ENCODE measurements at regions of chr11 and their contacts with region 1.

Region 1: GRCh38 chr11:113289431-113290187 is 24.8 kb upstream of the TTC12 start:
- DNase-seq: peak; percentile 81
- CTCF ChIP-seq: peak; percentile 90

Region 2: DNA sequence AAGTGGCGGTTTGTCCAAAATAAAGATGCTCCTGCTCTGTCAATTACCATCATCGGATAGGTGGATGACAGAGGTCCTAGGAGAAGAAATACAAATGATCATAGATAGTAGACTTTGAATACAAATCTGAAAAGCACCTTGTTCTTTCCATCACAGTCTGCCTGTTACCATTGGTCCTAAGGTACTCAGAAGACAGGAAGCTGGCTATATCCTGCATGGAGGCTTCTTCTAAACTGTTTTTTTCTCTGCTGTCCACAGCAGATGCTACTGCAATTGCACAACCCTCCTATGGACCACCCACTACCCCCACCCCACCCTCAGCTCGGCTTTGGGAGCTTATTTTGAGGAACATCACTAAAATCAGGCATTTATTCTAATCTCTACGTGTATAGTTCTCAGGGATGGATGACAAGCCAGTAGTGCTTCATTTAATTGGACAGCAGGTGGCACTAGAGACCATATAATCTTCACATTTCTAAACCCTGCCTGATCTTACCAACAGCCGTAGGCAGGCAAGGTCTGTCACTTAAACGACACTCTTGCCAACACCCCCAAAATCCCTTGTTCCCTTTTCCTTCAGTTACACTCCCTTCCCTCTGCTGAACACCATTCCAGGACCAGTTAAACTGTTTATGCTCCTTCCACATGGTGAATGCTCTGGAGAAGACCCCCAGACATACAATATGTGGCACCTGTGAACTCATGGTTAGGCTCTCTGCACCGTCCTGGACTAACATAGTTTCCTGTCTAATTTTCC is 1070.0 kb before region 1 on chr11:
- CTCF ChIA-PET with region 1: interaction called, 10 read pairs
- POLR2A ChIA-PET with region 1: no interaction called
- DNase-seq: peak; percentile 68
- CTCF ChIP-seq: peak; percentile 60

Region 3: DNA sequence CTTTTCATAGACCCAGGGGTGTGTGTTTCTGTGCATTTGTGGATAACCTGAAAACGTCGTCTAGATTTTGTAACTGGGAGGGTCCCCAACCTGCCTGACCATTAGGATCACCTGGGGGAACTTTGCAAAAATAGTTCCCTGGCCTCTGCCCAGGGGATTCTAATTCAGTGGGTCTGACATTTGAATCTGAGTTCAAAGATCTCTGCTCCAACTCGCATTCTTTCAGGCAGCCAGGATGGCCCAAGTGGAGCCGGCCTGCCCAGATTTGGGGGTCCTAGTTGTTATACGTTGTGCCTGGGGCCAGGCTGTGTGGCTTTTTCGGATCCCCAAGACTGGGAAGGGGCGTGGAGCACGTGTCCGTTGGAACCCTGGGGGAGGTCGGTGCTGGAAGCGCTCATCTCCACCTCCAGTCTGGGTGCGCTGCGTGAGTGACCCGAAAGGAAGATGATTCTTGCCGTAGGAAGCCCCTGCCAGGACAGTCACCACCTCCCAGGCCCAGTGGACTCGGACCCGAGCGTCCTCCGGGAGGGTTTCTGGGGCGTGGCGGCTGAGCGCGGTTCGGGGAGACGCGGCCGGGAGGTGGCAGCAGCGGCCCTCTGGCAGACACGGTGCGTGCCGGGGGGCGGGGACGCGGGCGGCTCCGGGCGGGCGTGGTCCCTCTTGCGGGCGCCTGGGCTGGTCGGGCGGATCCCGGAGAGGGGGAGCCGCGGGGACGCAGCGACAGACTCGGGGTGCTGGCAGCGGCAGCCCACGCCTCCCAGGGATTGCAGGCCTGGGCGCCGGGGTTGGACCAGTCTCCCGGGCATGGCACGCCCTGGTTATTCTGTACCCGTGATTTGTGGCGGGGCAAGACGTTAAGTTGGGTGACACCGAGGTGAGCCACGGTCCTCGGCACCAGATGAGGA is 999.8 kb before region 1 on chr11:
- CTCF ChIA-PET with region 1: interaction called, 34 read pairs
- POLR2A ChIA-PET with region 1: no interaction called
- DNase-seq: peak; percentile 88
- CTCF ChIP-seq: peak; percentile 90

Region 4: DNA sequence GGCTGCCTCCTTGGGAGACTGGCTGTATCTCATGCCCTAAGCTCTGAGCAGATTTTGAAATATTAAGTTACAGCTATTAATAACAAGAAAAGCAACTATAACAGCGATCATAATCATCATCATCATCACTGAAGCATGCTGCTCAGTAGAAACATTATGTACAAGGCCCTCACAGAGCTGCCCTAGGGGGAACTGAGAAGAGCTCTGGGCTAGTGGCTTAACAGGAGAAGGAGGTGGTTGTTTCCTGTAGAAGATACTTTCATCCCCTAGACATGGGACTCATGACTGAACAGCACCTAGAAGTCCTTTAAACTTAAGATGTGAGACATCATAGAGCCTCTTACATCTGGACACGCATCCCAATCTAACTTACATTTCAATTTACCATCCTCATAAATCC is 696.2 kb before region 1 on chr11:
- CTCF ChIA-PET with region 1: interaction called, 94 read pairs
- POLR2A ChIA-PET with region 1: no interaction called
- DNase-seq: no peak
- CTCF ChIP-seq: no peak

Region 5: GRCh38 chr11:113274713-113275582 is 14.7 kb before region 1 on chr11:
- CTCF ChIA-PET with region 1: interaction called, 21 read pairs
- POLR2A ChIA-PET with region 1: no interaction called
- DNase-seq: no peak
- CTCF ChIP-seq: no peak

Region 6: GRCh38 chr11:113305440-113306336 is 16.1 kb after region 1 on chr11:
- CTCF ChIA-PET with region 1: interaction called, 13 read pairs
- POLR2A ChIA-PET with region 1: no interaction called
- DNase-seq: peak; percentile 61
- CTCF ChIP-seq: peak; percentile 97

Region 7: GRCh38 chr11:113314389-113315301 is 25.0 kb after region 1 on chr11 and contains the start of gene TTC12:
- CTCF ChIA-PET with region 1: interaction called, 14 read pairs
- POLR2A ChIA-PET with region 1: no interaction called
- DNase-seq: peak; percentile 95
- CTCF ChIP-seq: no peak

Region 8: DNA sequence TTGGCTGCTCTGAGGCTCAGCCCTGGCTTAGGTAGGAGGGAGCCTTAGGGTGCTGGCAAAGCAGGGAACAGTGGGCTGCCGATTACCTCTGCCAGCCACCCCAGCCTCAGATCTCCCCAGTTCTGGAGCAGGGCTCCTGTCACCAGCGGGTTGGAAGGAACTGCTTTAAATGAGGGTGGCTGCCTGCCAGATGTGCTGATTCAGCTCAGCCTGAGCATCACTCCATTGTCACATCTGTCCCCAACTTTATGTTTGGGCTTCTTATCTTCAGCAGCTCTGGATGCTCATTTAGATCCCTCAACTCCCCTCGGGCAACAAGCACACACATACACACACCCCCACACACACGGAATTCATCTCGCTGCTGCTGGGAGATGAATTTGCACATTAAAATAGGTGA is 81.0 kb after region 1 on chr11:
- CTCF ChIA-PET with region 1: no interaction called
- POLR2A ChIA-PET with region 1: no interaction called
- DNase-seq: no peak
- CTCF ChIP-seq: no peak

Measured in GM10248 (cell line).